Adrenal gland (tissue), 19 donors: ENCODE measurements at regions of chr5 and their contacts with region 1.

Region 1: DNA sequence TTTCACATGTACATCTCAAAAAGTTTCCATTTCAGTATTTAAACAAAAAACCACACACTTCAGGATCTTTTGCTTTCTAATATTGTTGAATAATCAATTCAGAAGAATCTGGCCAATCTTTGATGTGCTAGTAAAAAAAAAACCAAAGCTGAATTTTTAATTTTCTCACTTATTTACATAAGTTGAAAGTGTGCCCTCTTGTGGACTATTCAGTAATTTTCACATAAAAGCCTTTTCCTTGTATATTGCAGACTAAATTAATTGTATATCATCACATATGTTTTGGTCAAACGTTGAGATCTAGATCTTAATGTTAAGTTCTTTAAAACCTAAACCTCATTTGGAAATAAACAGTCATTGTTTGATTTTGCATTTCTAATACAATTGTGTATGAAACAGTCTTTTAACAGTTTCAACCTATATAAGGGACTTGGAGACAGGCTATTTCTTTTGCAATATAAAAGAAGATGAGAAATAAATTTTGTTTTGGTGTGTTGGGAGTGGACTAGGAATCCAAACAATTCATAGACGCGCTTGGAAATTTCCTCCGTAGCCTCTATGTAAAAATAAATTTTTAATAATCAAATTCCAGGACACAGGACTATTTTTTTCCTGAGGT is 68.1 kb downstream of the NIPBL start:
- DNase-seq: no peak
- H3K4me3 ChIP-seq: no peak overlapping the region
- H3K27ac ChIP-seq: no peak overlapping the region
- H3K4me1 ChIP-seq: peaks cover 16 to 37% of the 10 kb centered on the region in 2 donors
- H3K27me3 ChIP-seq: no peaks in the 10 kb centered on the region
- CTCF ChIP-seq: peak in 5 of 6 experiments; percentile 30 to 64 (median 58)
- POLR2A ChIP-seq: no peak

Region 2: GRCh38 chr5:36875790-36876388 is 68.8 kb before region 1 on chr5:
- intact Hi-C with region 1: loop called in 1 of 2 experiments (anchors 10 kb)
- DNase-seq: peak; percentile 79 to 90 (median 86)
- H3K4me3 ChIP-seq: peak overlapping the region; percentile 60 to 97 (median 78)
- H3K27ac ChIP-seq: peak overlapping the region; percentile 91 to 99 (median 97)
- H3K4me1 ChIP-seq: peaks cover 19 to 45% of the 10 kb centered on the region in 2 donors
- H3K27me3 ChIP-seq: no peaks in the 10 kb centered on the region
- CTCF ChIP-seq: peak; percentile 21 to 60 (median 40)
- POLR2A ChIP-seq: peak in 1 of 2 donors; percentile 70

Region 3: DNA sequence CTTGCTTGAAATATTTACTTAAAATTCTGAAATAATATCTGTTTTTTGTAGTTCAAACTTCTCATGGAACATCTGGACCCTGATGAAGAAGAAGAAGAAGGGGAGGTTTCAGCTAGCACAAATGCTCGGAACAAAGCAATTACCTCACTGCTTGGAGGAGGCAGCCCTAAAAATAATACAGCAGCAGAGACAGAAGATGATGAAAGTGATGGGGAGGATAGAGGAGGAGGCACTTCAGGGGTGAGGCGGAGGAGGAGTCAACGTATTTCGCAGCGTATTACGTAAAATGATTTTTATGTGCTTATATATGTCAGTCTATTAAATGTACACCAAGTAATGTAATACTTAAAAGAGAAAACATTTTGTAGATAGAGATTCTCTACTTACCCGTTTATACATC is 119.0 kb after region 1 on chr5:
- intact Hi-C with region 1: no loop called
- DNase-seq: no peak
- H3K4me3 ChIP-seq: no peak overlapping the region
- H3K27ac ChIP-seq: no peak overlapping the region
- H3K4me1 ChIP-seq: no peaks in the 10 kb centered on the region
- H3K27me3 ChIP-seq: no peaks in the 10 kb centered on the region
- CTCF ChIP-seq: no peak
- POLR2A ChIP-seq: no peak